HEK293 (cell line): ENCODE measurements at regions of chr6 and their contacts with region 1.

Region 1: GRCh38 chr6:72425003-72425681 is 196.7 kb upstream of the KCNQ5 start:
- H3K4me3 ChIP-seq: no peak overlapping the region
- H3K27ac ChIP-seq: no peak overlapping the region
- H3K4me1 ChIP-seq: no peaks in the 10 kb centered on the region
- CTCF ChIP-seq: no peak

Region 2: DNA sequence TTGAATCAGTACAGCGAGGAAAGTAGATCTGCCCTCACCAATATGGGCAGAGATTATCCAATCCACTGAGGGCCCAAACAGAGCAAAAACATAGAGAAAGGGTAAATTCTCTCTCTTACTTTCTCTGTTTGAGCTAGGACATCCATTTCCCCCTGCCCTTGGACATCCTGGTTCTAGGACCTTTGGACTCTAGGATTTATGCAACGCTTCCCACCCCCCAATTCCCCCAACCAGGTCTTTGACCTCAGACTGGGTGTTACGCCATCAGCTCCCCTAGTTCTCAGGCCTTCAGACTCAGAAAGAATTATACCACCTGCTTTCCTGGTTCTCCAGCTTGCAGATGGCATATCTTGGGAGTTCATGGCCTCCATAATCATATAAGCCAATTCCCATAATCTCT is 1458.1 kb before region 1 on chr6:
- CTCF ChIA-PET with region 1: no interaction called
- POLR2A ChIA-PET with region 1: no interaction called
- H3K4me3 ChIP-seq: no peak overlapping the region
- H3K27ac ChIP-seq: no peak overlapping the region
- H3K4me1 ChIP-seq: no peaks in the 10 kb centered on the region
- CTCF ChIP-seq: no peak

Region 3: GRCh38 chr6:72446430-72446829 is 21.3 kb after region 1 on chr6:
- CTCF ChIA-PET with region 1: no interaction called
- POLR2A ChIA-PET with region 1: no interaction called
- H3K4me3 ChIP-seq: no peak overlapping the region
- H3K27ac ChIP-seq: no peak overlapping the region
- H3K4me1 ChIP-seq: no peaks in the 10 kb centered on the region
- CTCF ChIP-seq: no peak

Region 4: DNA sequence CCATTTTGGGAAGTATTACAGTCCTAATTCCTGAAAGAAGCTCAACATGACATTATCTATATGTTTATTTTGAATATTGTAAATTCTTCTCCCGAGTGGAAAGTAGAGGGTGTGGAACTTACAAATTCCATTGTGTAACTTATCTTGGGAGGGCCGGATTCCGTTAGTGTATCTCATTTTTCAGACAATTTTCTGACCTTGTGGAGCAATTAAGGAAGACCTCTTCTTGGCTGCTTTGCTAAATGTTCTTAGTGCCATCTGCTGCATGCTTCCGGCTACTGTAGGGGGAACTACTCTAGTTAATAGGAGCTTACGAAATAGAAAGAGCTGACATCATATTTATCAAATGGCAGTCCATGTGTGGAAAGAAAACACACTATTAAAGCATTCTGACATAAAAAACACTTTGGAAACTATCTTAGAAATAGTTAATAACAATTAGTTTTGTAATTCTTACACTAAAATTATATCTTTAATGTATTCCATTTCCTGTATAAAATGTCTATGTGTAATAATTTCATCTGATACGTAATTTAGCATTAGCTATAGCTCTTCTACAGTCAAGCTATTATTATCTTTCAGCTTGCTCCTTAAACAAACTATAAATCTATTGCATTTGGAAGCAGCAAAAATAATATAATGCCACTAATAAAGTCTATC is 155.3 kb after region 1 on chr6:
- CTCF ChIA-PET with region 1: interaction called, 14 read pairs
- POLR2A ChIA-PET with region 1: no interaction called
- H3K4me3 ChIP-seq: no peak overlapping the region
- H3K27ac ChIP-seq: no peak overlapping the region
- H3K4me1 ChIP-seq: no peaks in the 10 kb centered on the region
- CTCF ChIP-seq: peak; percentile 44

Region 5: DNA sequence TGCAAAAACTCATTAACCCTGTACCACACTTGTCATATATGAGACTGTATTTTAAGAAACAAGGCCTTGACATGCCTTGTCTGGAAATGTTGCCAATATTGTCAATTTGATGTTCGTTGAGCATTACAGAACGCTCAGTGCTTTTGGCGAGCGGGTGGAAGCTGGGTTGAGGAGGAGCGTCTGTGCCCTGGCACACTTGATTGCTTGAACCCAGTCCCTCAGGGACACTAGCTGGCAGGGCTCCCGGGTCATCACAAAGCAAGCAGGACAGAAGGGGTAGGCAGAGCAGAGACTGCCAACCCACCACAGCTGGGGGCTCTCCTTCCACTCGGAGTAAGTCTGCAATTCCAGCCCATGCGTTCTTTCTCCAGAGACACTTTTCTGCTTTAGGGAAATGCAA is 513.9 kb after region 1 on chr6:
- CTCF ChIA-PET with region 1: no interaction called
- POLR2A ChIA-PET with region 1: no interaction called
- H3K4me3 ChIP-seq: no peak overlapping the region
- H3K27ac ChIP-seq: no peak overlapping the region
- H3K4me1 ChIP-seq: no peaks in the 10 kb centered on the region
- CTCF ChIP-seq: no peak